HCT116 (cell line): ENCODE measurements at regions of chr3 and their contacts with region 1.

Region 1: GRCh38 chr3:49339945-49340800 is at the start of gene USP4:
- DNase-seq: peak; percentile 71
- ATAC-seq: peak; percentile 96
- H3K4me3 ChIP-seq: peak within 1 kb of the TSS; percentile 62 to 94
- H3K27ac ChIP-seq: peak within 1 kb of the TSS; percentile 73
- H3K4me1 ChIP-seq: peaks cover 8 to 20% of the 10 kb centered on the region in 2 experiments; a peak in 3 of 4 replicates
- H3K27me3 ChIP-seq: no peaks in the 10 kb centered on the region
- CTCF ChIP-seq: peak; percentile 30 to 37 (median 32); a peak in 5 of 6 replicates
- POLR2A ChIP-seq: peak; percentile 62
- RAD21 ChIP-seq: peak; percentile 60
- total RNA-seq, gene USP4: 31.7 TPM

Region 2: DNA sequence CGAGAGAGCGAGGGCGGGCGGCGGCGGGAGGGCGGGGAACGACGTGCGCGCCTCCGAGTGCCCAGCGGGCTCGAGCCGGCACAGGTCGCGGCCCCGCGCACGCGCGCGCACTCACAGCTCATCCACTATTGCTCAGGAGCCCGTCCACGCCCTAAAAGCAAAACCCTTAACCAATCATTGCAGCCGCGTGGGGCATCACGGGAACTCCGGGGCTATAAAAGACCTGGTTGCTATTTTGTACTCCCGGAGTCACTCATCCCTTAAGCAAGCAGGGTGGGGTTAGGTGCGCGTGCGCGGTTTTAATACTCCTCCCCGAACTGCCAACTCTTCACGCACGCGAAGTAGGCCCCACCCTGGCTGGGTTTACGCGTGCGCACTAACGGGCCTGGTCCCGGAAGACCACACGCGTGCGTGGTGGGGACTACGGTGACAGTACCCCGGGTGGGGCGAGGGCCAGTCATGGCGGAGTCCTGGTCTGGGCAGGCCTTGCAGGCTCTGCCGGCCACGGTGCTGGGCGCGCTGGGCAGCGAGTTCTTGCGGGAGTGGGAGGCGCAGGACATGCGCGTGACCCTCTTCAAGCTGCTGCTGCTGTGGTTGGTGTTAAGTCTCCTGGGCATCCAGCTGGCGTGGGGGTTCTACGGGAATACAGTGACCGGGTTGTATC is 71.9 kb after region 1 on chr3 and contains the starts of genes RHOA and TCTA:
- CTCF ChIA-PET with region 1: no interaction called
- POLR2A ChIA-PET with region 1: interaction called, 13 read pairs
- RAD21 ChIA-PET with region 1: no interaction called
- intact Hi-C with region 1: loop called (anchors 1 kb)
- DNase-seq: peak; percentile 100
- ATAC-seq: peak; percentile 88
- H3K4me3 ChIP-seq: peak within 1 kb of the TSS; percentile 94 to 95
- H3K27ac ChIP-seq: peak within 1 kb of the TSS; percentile 95
- H3K4me1 ChIP-seq: peaks cover 31 to 58% of the 10 kb centered on the region in 2 experiments; a peak in 3 of 4 replicates
- H3K27me3 ChIP-seq: no peaks in the 10 kb centered on the region
- CTCF ChIP-seq: no peak
- POLR2A ChIP-seq: peak; percentile 98
- RAD21 ChIP-seq: no peak
- total RNA-seq, gene RHOA: 497 TPM
- total RNA-seq, gene TCTA: 11.9 TPM

Region 3: GRCh38 chr3:49747792-49748480 is 407.8 kb after region 1 on chr3:
- CTCF ChIA-PET with region 1: no interaction called
- POLR2A ChIA-PET with region 1: no interaction called
- RAD21 ChIA-PET with region 1: no interaction called
- intact Hi-C with region 1: no loop called
- DNase-seq: no peak
- ATAC-seq: no peak
- H3K4me3 ChIP-seq: no peak overlapping the region
- H3K27ac ChIP-seq: no peak overlapping the region
- H3K4me1 ChIP-seq: no peaks in the 10 kb centered on the region
- H3K27me3 ChIP-seq: no peaks in the 10 kb centered on the region
- CTCF ChIP-seq: no peak
- POLR2A ChIP-seq: no peak
- RAD21 ChIP-seq: no peak

Region 4: GRCh38 chr3:49955636-49956035 is 615.5 kb after region 1 on chr3:
- CTCF ChIA-PET with region 1: no interaction called
- POLR2A ChIA-PET with region 1: no interaction called
- RAD21 ChIA-PET with region 1: no interaction called
- intact Hi-C with region 1: no loop called
- DNase-seq: no peak
- ATAC-seq: peak; percentile 58
- H3K4me3 ChIP-seq: no peak overlapping the region
- H3K27ac ChIP-seq: no peak overlapping the region
- H3K4me1 ChIP-seq: peaks cover 3 to 10% of the 10 kb centered on the region in 2 experiments; a peak in 3 of 4 replicates
- H3K27me3 ChIP-seq: no peaks in the 10 kb centered on the region
- CTCF ChIP-seq: no peak
- POLR2A ChIP-seq: no peak
- RAD21 ChIP-seq: no peak